ENCODE measurements at regions of chr18 and their contacts with region 1.

Region 1: DNA sequence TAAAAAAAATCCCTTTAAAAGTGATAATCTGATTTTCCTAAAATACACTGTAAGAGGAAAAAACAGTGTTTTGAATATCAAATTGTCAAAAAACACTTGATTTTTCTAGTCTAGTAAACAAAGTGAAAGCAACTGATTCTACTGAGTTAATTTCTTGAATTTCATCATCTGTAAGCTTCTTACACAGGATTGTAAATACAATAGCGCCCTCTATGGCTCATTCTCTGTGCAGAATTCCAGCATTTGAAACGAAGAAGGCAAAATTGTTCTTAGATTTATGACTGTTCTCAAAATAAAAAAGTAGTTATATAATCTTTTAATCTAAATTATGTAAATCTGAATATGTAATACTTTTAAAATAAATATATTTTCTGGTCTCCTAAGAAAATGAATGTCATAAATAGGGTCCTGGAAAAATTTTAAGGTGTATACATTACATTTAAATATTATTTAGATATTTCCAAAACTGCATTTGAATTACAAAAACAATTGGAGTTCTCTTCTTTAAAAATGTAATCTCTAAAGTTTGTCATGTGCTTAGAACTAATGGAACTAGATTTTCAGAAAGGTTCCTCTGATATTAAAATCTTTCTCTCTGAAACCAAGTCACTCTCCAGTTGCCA is 176.9 kb upstream of the MC4R start:
- DNase-seq: peak; percentile 52
- ATAC-seq: no peak
- H3K4me3 ChIP-seq: no peak overlapping the region
- H3K4me3 Mint-ChIP-seq: no peak overlapping the region
- H3K27ac ChIP-seq: no peak overlapping the region
- H3K27ac Mint-ChIP-seq: no peak overlapping the region
- H3K4me1 ChIP-seq: no peaks in the 10 kb centered on the region
- H3K4me1 Mint-ChIP-seq: no peaks in the 10 kb centered on the region
- H3K27me3 ChIP-seq: no peaks in the 10 kb centered on the region
- H3K27me3 Mint-ChIP-seq: no peaks in the 10 kb centered on the region
- CTCF ChIP-seq: peak; percentile 86

Region 2: GRCh38 chr18:59085797-59086196 is 1463.7 kb before region 1 on chr18:
- CTCF ChIA-PET with region 1: no interaction called
- POLR2A ChIA-PET with region 1: no interaction called
- intact Hi-C with region 1: loop called (anchors 10 kb)
- DNase-seq: no peak
- ATAC-seq: no peak
- H3K4me3 ChIP-seq: no peak overlapping the region
- H3K4me3 Mint-ChIP-seq: no peak overlapping the region
- H3K27ac ChIP-seq: no peak overlapping the region
- H3K27ac Mint-ChIP-seq: no peak overlapping the region
- H3K4me1 ChIP-seq: peaks cover 15 to 19% of the 10 kb centered on the region in 2 donors
- H3K4me1 Mint-ChIP-seq: peaks cover 29% of the 10 kb centered on the region
- H3K27me3 ChIP-seq: peaks cover 0 to 5% (median 0%) of the 10 kb centered on the region in 4 experiments
- H3K27me3 Mint-ChIP-seq: peaks cover 6% of the 10 kb centered on the region
- CTCF ChIP-seq: no peak

Region 3: DNA sequence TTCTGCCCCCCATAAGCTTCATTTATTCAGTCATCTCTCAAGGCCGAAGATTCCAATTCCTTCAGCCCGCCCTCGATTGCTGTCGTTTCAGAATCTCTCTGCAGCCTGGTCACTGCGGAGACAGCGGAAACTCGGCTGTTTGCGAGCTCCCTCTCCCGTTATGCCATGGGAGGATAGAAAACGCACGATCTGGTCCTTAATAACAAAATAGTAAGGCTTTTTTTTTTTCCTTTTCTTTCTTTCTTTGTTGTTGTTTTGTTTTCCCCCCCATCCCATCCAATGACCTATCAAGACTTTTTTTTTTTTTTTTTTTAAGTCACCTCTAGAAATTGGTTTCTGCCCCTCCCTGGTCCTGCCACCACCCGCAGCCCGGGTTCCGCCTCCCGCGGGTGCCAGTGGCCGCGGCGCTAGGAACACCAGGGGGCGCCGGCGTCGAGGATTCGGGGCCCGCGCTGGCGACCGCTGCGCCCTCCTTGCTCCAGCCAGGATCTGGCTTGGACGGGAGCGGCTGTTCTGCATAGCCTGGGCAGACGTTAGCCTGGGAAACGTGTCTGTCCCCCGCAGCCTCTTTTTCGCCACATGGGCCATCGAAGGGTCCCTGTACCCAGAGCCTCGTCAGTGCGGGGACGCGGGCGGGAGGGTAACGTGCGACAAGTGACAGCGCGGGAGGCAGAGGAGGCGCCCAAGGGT is 1241.1 kb before region 1 on chr18:
- CTCF ChIA-PET with region 1: interaction called, 4 read pairs
- POLR2A ChIA-PET with region 1: no interaction called
- intact Hi-C with region 1: loop called (anchors 5 kb)
- DNase-seq: peak; percentile 72
- ATAC-seq: peak; percentile 86
- H3K4me3 ChIP-seq: peak overlapping the region in 3 of 5 experiments; percentile 23 to 57 (median 33)
- H3K4me3 Mint-ChIP-seq: peak overlapping the region; percentile 63
- H3K27ac ChIP-seq: no peak overlapping the region
- H3K27ac Mint-ChIP-seq: no peak overlapping the region
- H3K4me1 ChIP-seq: peaks cover 10 to 11% of the 10 kb centered on the region in 2 donors
- H3K4me1 Mint-ChIP-seq: no peaks in the 10 kb centered on the region
- H3K27me3 ChIP-seq: peaks cover 0 to 30% (median 15%) of the 10 kb centered on the region in 4 experiments
- H3K27me3 Mint-ChIP-seq: peaks cover 62% of the 10 kb centered on the region
- CTCF ChIP-seq: peak; percentile 78

Region 4: GRCh38 chr18:59631583-59632181 is 917.8 kb before region 1 on chr18:
- CTCF ChIA-PET with region 1: interaction called, 3 read pairs
- POLR2A ChIA-PET with region 1: no interaction called
- intact Hi-C with region 1: loop called (anchors 5 kb)
- DNase-seq: no peak
- ATAC-seq: no peak
- H3K4me3 ChIP-seq: no peak overlapping the region
- H3K4me3 Mint-ChIP-seq: no peak overlapping the region
- H3K27ac ChIP-seq: no peak overlapping the region
- H3K27ac Mint-ChIP-seq: no peak overlapping the region
- H3K4me1 ChIP-seq: no peaks in the 10 kb centered on the region
- H3K4me1 Mint-ChIP-seq: no peaks in the 10 kb centered on the region
- H3K27me3 ChIP-seq: no peaks in the 10 kb centered on the region
- H3K27me3 Mint-ChIP-seq: peaks cover 17% of the 10 kb centered on the region
- CTCF ChIP-seq: peak; percentile 11

Region 5: GRCh38 chr18:59996370-59996966 is 553.0 kb before region 1 on chr18:
- CTCF ChIA-PET with region 1: interaction called, 15 read pairs
- POLR2A ChIA-PET with region 1: no interaction called
- intact Hi-C with region 1: no loop called
- DNase-seq: no peak
- ATAC-seq: no peak
- H3K4me3 ChIP-seq: no peak overlapping the region
- H3K4me3 Mint-ChIP-seq: no peak overlapping the region
- H3K27ac ChIP-seq: no peak overlapping the region
- H3K27ac Mint-ChIP-seq: no peak overlapping the region
- H3K4me1 ChIP-seq: no peaks in the 10 kb centered on the region
- H3K4me1 Mint-ChIP-seq: no peaks in the 10 kb centered on the region
- H3K27me3 ChIP-seq: peaks cover 0 to 3% (median 0%) of the 10 kb centered on the region in 4 experiments
- H3K27me3 Mint-ChIP-seq: peaks cover 35% of the 10 kb centered on the region
- CTCF ChIP-seq: peak; percentile 64

Measured in B cell (primary cell).